Naive thymus-derived CD4-positive, alpha-beta T cell (primary cell): ENCODE measurements at regions of chr7 and their contacts with region 1.

Region 1: GRCh38 chr7:16847366-16847864 is 34.4 kb downstream of the AGR3 start:
- DNase-seq: no peak
- ATAC-seq: no peak
- H3K4me3 ChIP-seq: no peak overlapping the region
- H3K4me3 Mint-ChIP-seq: no peak overlapping the region
- H3K27ac ChIP-seq: no peak overlapping the region
- H3K27ac Mint-ChIP-seq: no peak overlapping the region
- H3K4me1 ChIP-seq: no peaks in the 10 kb centered on the region
- H3K4me1 Mint-ChIP-seq: peaks cover 0 to 12% (median 5%) of the 10 kb centered on the region in 7 donors
- H3K27me3 ChIP-seq: no peaks in the 10 kb centered on the region
- H3K27me3 Mint-ChIP-seq: peaks cover 16 to 41% (median 36%) of the 10 kb centered on the region in 5 donors

Region 2: GRCh38 chr7:16223963-16224707 is 623.3 kb before region 1 on chr7:
- CTCF ChIA-PET with region 1: no interaction called
- POLR2A ChIA-PET with region 1: no interaction called
- intact Hi-C with region 1: no loop called
- DNase-seq: peak in 4 of 9 donors; percentile 0 to 26 (median 6)
- ATAC-seq: peak; percentile 53
- H3K4me3 ChIP-seq: no peak overlapping the region
- H3K4me3 Mint-ChIP-seq: peak overlapping the region in 7 of 10 donors; percentile 11 to 40 (median 30)
- H3K27ac ChIP-seq: no peak overlapping the region
- H3K27ac Mint-ChIP-seq: no peak overlapping the region
- H3K4me1 ChIP-seq: no peaks in the 10 kb centered on the region
- H3K4me1 Mint-ChIP-seq: peaks cover 0 to 16% (median 4%) of the 10 kb centered on the region in 7 donors
- H3K27me3 ChIP-seq: no peaks in the 10 kb centered on the region
- H3K27me3 Mint-ChIP-seq: no peaks in the 10 kb centered on the region

Region 3: GRCh38 chr7:16817536-16817935 is 29.9 kb before region 1 on chr7:
- CTCF ChIA-PET with region 1: no interaction called
- POLR2A ChIA-PET with region 1: no interaction called
- intact Hi-C with region 1: no loop called
- DNase-seq: no peak
- ATAC-seq: no peak
- H3K4me3 ChIP-seq: no peak overlapping the region
- H3K4me3 Mint-ChIP-seq: no peak overlapping the region
- H3K27ac ChIP-seq: no peak overlapping the region
- H3K27ac Mint-ChIP-seq: no peak overlapping the region
- H3K4me1 ChIP-seq: no peaks in the 10 kb centered on the region
- H3K4me1 Mint-ChIP-seq: peaks cover 0 to 5% (median 0%) of the 10 kb centered on the region in 7 donors
- H3K27me3 ChIP-seq: no peaks in the 10 kb centered on the region
- H3K27me3 Mint-ChIP-seq: peaks cover 0 to 26% (median 20%) of the 10 kb centered on the region in 5 donors

Region 4: GRCh38 chr7:16926283-16926682 is 78.9 kb after region 1 on chr7:
- CTCF ChIA-PET with region 1: no interaction called
- POLR2A ChIA-PET with region 1: no interaction called
- intact Hi-C with region 1: loop called in 1 of 2 experiments (anchors 2 kb)
- DNase-seq: no peak
- ATAC-seq: peak; percentile 78
- H3K4me3 ChIP-seq: no peak overlapping the region
- H3K4me3 Mint-ChIP-seq: no peak overlapping the region
- H3K27ac ChIP-seq: no peak overlapping the region
- H3K27ac Mint-ChIP-seq: peak overlapping the region in 1 of 9 donors; percentile 44
- H3K4me1 ChIP-seq: peaks cover 0 to 12% of the 10 kb centered on the region in 2 donors
- H3K4me1 Mint-ChIP-seq: peaks cover 6 to 52% (median 32%) of the 10 kb centered on the region in 7 donors
- H3K27me3 ChIP-seq: no peaks in the 10 kb centered on the region
- H3K27me3 Mint-ChIP-seq: peaks cover 0 to 5% (median 0%) of the 10 kb centered on the region in 5 donors